CD8-positive, alpha-beta T cell (primary cell): ENCODE measurements at regions of chr7 and their contacts with region 1.

Region 1: DNA sequence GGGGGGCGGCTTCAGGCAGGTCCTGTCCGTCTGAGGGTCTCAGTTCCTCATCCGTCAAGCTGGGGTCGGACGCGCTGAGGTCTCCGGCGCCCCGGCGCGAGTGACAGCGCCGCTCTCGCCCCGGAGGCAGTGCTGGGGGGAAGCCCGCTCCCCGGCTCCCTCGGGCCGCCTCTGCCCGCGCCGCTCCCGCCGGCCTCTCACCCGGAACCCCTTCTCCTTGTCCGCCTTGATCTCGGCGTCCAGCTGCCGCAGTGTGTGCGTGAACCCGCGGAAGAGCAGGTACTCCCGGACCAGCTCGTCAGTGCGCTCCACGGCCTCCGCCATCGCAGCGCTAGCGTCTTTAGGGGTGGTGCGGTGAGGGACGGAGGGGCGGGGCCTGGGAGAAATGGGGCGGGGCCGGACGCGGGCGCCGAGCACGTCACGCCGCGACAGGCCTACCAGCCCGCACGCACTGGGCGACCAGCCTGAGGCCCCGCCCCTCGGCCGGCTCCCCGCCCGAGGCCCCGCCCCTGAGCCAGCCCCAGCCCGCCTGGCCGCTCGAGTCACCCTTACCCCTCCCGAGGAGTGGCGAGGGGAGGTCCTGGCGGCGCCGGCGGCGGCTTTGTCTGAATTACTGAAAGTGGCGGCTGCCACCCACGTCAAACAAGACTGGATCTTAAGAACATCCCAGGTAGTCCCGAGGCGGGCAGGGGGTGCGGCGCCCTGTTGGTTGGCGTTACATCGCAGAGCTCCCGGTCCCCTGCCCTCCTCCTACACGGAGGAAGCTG is at the start of gene WDR91:
- DNase-seq: peak; percentile 95 to 98 (median 96)
- ATAC-seq: peak; percentile 93
- H3K4me3 ChIP-seq: peak within 1 kb of the TSS; percentile 74 to 91
- H3K4me3 Mint-ChIP-seq: peak within 1 kb of the TSS; percentile 97
- H3K27ac ChIP-seq: peak within 1 kb of the TSS; percentile 80 to 91
- H3K27ac Mint-ChIP-seq: peak within 1 kb of the TSS; percentile 99
- H3K4me1 ChIP-seq: peaks cover 12% of the 10 kb centered on the region
- H3K4me1 Mint-ChIP-seq: peaks cover 42% of the 10 kb centered on the region
- H3K27me3 ChIP-seq: no peaks in the 10 kb centered on the region
- H3K27me3 Mint-ChIP-seq: no peaks in the 10 kb centered on the region
- CTCF ChIP-seq: no peak
- total RNA-seq, gene WDR91: 43.3 to 46.6 TPM

Region 2: GRCh38 chr7:133252858-133253518 is 1958.4 kb before region 1 on chr7 and contains the start of gene EXOC4:
- CTCF ChIA-PET with region 1: no interaction called
- POLR2A ChIA-PET with region 1: no interaction called
- intact Hi-C with region 1: loop called (anchors 2 to 5 kb)
- DNase-seq: peak; percentile 82 to 98 (median 89)
- ATAC-seq: peak; percentile 99
- H3K4me3 ChIP-seq: peak within 1 kb of the TSS; percentile 88
- H3K4me3 Mint-ChIP-seq: peak within 1 kb of the TSS; percentile 96
- H3K27ac ChIP-seq: peak within 1 kb of the TSS; percentile 83 to 92
- H3K27ac Mint-ChIP-seq: peak within 1 kb of the TSS; percentile 96
- H3K4me1 ChIP-seq: peaks cover 15% of the 10 kb centered on the region
- H3K4me1 Mint-ChIP-seq: peaks cover 44% of the 10 kb centered on the region
- H3K27me3 ChIP-seq: no peaks in the 10 kb centered on the region
- H3K27me3 Mint-ChIP-seq: no peaks in the 10 kb centered on the region
- CTCF ChIP-seq: no peak
- total RNA-seq, gene EXOC4: 47.9 to 50.5 TPM

Region 3: DNA sequence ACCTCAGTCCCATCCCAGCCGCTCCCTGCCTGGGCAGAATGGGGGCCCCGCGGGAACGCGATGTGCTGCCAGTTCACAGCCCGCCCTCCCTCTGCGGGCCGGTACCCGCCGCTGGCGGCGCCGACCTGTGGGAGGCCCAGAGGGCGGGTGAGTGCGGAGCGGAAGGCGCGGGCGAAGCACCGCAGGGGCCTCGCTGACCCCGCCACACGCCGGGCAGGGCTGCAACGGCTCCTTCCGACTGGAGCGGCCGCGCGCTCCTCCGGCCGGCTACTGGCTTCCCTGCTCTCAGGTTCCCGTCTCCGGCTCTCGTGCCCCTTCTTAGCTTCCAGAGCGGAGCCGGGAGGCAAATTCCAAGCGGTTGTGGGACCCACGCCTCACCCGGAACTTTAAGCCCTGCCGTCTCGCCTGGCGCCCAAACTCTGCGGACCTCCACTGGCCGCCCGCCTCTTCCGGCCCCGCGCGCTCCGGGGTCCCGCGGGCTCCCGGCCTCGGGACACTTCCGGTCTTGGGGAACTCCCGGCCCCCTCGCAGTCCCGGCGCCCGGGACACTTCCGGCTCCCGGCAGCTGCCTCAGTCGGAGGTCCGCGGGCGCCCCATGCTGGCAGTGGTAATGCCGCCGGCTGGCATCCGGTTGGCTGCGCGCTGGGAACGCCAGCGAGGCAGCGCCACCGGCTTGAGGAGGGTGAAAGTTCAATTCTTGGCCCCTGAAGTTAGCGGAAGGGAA is 40.9 kb before region 1 on chr7 and contains the start of gene CYREN:
- CTCF ChIA-PET with region 1: interaction called, 4 read pairs
- POLR2A ChIA-PET with region 1: interaction called, 12 read pairs
- intact Hi-C with region 1: loop called (anchors 1 to 2 kb)
- DNase-seq: peak; percentile 75 to 95 (median 91)
- ATAC-seq: peak; percentile 75
- H3K4me3 ChIP-seq: peak within 1 kb of the TSS; percentile 89 to 92
- H3K4me3 Mint-ChIP-seq: peak within 1 kb of the TSS; percentile 84
- H3K27ac ChIP-seq: peak within 1 kb of the TSS; percentile 94 to 98
- H3K27ac Mint-ChIP-seq: peak within 1 kb of the TSS; percentile 97
- H3K4me1 ChIP-seq: peaks cover 38% of the 10 kb centered on the region
- H3K4me1 Mint-ChIP-seq: peaks cover 47% of the 10 kb centered on the region
- H3K27me3 ChIP-seq: no peaks in the 10 kb centered on the region
- H3K27me3 Mint-ChIP-seq: no peaks in the 10 kb centered on the region
- CTCF ChIP-seq: peak; percentile 71
- total RNA-seq, gene CYREN: 14.0 to 15.2 TPM

Region 4: GRCh38 chr7:135558337-135558767 is 347.0 kb after region 1 on chr7:
- CTCF ChIA-PET with region 1: no interaction called
- POLR2A ChIA-PET with region 1: no interaction called
- intact Hi-C with region 1: loop called (anchors 1 to 5 kb)
- DNase-seq: peak; percentile 37 to 87 (median 68)
- ATAC-seq: peak; percentile 52
- H3K4me3 ChIP-seq: peak overlapping the region; percentile 85 to 86
- H3K4me3 Mint-ChIP-seq: no peak overlapping the region
- H3K27ac ChIP-seq: peak overlapping the region; percentile 90 to 98
- H3K27ac Mint-ChIP-seq: no peak overlapping the region
- H3K4me1 ChIP-seq: peaks cover 16% of the 10 kb centered on the region
- H3K4me1 Mint-ChIP-seq: peaks cover 17% of the 10 kb centered on the region
- H3K27me3 ChIP-seq: no peaks in the 10 kb centered on the region
- H3K27me3 Mint-ChIP-seq: no peaks in the 10 kb centered on the region
- CTCF ChIP-seq: peak; percentile 52

Region 5: DNA sequence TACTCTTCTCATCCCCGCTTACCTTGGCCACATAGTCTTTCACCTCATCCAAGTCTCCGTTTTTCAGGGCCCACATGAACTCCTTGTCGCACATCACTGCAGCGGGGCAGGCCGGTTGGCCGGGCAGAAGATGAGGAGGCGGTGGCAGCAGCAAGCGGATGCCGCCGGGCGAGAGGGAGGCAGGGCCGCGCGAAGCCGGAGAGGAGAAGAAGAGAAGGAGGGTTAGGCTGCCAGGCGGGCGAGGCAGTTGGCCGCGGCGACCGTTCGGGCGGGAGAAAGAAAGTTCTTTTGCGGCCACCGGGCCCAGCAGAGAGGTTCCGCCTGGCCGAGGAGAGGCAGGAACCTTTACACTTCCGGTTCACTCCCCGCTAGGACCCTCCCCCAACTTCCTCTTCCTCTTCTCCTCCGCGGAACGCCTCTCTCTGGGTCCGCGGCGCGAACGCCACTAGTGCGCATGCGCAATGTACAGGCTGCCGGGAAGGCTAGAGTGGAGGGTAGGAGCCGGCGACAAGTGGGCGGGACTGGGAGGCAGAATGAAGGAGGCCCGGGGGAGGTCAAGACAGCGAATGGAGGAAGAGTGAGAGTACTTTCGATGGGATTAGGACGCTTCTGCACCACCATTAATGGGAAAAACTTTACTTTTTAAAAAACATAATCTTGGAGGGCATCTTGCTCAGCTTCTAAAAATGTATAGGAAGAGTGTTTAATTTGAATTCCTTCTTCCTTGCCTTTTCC is 765.8 kb after region 1 on chr7 and contains the start of gene MTPN:
- CTCF ChIA-PET with region 1: no interaction called
- POLR2A ChIA-PET with region 1: no interaction called
- intact Hi-C with region 1: loop called in 1 of 2 experiments (anchors 2 kb)
- DNase-seq: peak; percentile 94 to 98 (median 98)
- ATAC-seq: peak; percentile 81
- H3K4me3 ChIP-seq: peak within 1 kb of the TSS; percentile 89 to 93
- H3K4me3 Mint-ChIP-seq: peak within 1 kb of the TSS; percentile 92
- H3K27ac ChIP-seq: peak within 1 kb of the TSS; percentile 82 to 88
- H3K27ac Mint-ChIP-seq: peak within 1 kb of the TSS; percentile 93
- H3K4me1 ChIP-seq: peaks cover 71% of the 10 kb centered on the region
- H3K4me1 Mint-ChIP-seq: peaks cover 79% of the 10 kb centered on the region
- H3K27me3 ChIP-seq: no peaks in the 10 kb centered on the region
- H3K27me3 Mint-ChIP-seq: no peaks in the 10 kb centered on the region
- CTCF ChIP-seq: no peak
- total RNA-seq, gene MTPN: 91.9 to 101 TPM